ENCODE measurements at regions of chr1 and their contacts with region 1.

Region 1: GRCh38 chr1:156456622-156457465 is 43.7 kb downstream of the MEF2D start:
- DNase-seq: peak; percentile 95 to 99 (median 97)
- H3K4me3 ChIP-seq: peak overlapping the region; percentile 61 to 81
- H3K4me3 Mint-ChIP-seq: peak overlapping the region; percentile 92 to 97 (median 94)
- H3K27ac ChIP-seq: peak overlapping the region; percentile 99
- H3K27ac Mint-ChIP-seq: peak overlapping the region; percentile 98 to 100 (median 99)
- H3K4me1 ChIP-seq: peaks cover 17% of the 10 kb centered on the region
- H3K4me1 Mint-ChIP-seq: peaks cover 7 to 26% (median 12%) of the 10 kb centered on the region in 4 donors
- H3K27me3 ChIP-seq: no peaks in the 10 kb centered on the region
- H3K27me3 Mint-ChIP-seq: no peaks in the 10 kb centered on the region

Region 2: GRCh38 chr1:156409439-156409838 is 47.4 kb before region 1 on chr1:
- CTCF ChIA-PET with region 1: no interaction called
- POLR2A ChIA-PET with region 1: no interaction called
- intact Hi-C with region 1: no loop called
- DNase-seq: no peak
- H3K4me3 ChIP-seq: no peak overlapping the region
- H3K4me3 Mint-ChIP-seq: no peak overlapping the region
- H3K27ac ChIP-seq: no peak overlapping the region
- H3K27ac Mint-ChIP-seq: no peak overlapping the region
- H3K4me1 ChIP-seq: no peaks in the 10 kb centered on the region
- H3K4me1 Mint-ChIP-seq: no peaks in the 10 kb centered on the region
- H3K27me3 ChIP-seq: no peaks in the 10 kb centered on the region
- H3K27me3 Mint-ChIP-seq: peaks cover 16 to 35% of the 10 kb centered on the region in 2 donors

Region 3: GRCh38 chr1:156421062-156421938 is 35.5 kb before region 1 on chr1:
- CTCF ChIA-PET with region 1: no interaction called
- POLR2A ChIA-PET with region 1: interaction called, 3 read pairs
- intact Hi-C with region 1: loop called (anchors 5 kb)
- DNase-seq: peak; percentile 54 to 70 (median 63)
- H3K4me3 ChIP-seq: peak overlapping the region; percentile 23 to 71
- H3K4me3 Mint-ChIP-seq: peak overlapping the region; percentile 88 to 99 (median 90)
- H3K27ac ChIP-seq: no peak overlapping the region
- H3K27ac Mint-ChIP-seq: peak overlapping the region; percentile 17 to 83 (median 52)
- H3K4me1 ChIP-seq: peaks cover 33% of the 10 kb centered on the region
- H3K4me1 Mint-ChIP-seq: peaks cover 13 to 37% (median 23%) of the 10 kb centered on the region in 4 donors
- H3K27me3 ChIP-seq: peaks cover 47% of the 10 kb centered on the region
- H3K27me3 Mint-ChIP-seq: peaks cover 31 to 43% of the 10 kb centered on the region in 2 donors

Region 4: GRCh38 chr1:156480411-156481192 is 23.8 kb after region 1 on chr1:
- CTCF ChIA-PET with region 1: interaction called, 13 read pairs
- POLR2A ChIA-PET with region 1: interaction called, 4 read pairs
- intact Hi-C with region 1: loop called (anchors 1 kb)
- DNase-seq: peak; percentile 77 to 81 (median 80)
- H3K4me3 ChIP-seq: no peak overlapping the region
- H3K4me3 Mint-ChIP-seq: peak overlapping the region in 6 of 8 donors; percentile 33 to 58 (median 46)
- H3K27ac ChIP-seq: peak overlapping the region; percentile 42
- H3K27ac Mint-ChIP-seq: peak overlapping the region; percentile 75 to 97 (median 92)
- H3K4me1 ChIP-seq: peaks cover 47% of the 10 kb centered on the region
- H3K4me1 Mint-ChIP-seq: peaks cover 31 to 53% (median 44%) of the 10 kb centered on the region in 4 donors
- H3K27me3 ChIP-seq: no peaks in the 10 kb centered on the region
- H3K27me3 Mint-ChIP-seq: no peaks in the 10 kb centered on the region

Region 5: GRCh38 chr1:156551866-156552265 is 95.0 kb after region 1 on chr1:
- CTCF ChIA-PET with region 1: no interaction called
- POLR2A ChIA-PET with region 1: no interaction called
- intact Hi-C with region 1: no loop called
- DNase-seq: no peak
- H3K4me3 ChIP-seq: no peak overlapping the region
- H3K4me3 Mint-ChIP-seq: no peak overlapping the region
- H3K27ac ChIP-seq: no peak overlapping the region
- H3K27ac Mint-ChIP-seq: no peak overlapping the region
- H3K4me1 ChIP-seq: no peaks in the 10 kb centered on the region
- H3K4me1 Mint-ChIP-seq: peaks cover 2 to 5% (median 3%) of the 10 kb centered on the region in 4 donors
- H3K27me3 ChIP-seq: no peaks in the 10 kb centered on the region
- H3K27me3 Mint-ChIP-seq: no peaks in the 10 kb centered on the region

Region 6: DNA sequence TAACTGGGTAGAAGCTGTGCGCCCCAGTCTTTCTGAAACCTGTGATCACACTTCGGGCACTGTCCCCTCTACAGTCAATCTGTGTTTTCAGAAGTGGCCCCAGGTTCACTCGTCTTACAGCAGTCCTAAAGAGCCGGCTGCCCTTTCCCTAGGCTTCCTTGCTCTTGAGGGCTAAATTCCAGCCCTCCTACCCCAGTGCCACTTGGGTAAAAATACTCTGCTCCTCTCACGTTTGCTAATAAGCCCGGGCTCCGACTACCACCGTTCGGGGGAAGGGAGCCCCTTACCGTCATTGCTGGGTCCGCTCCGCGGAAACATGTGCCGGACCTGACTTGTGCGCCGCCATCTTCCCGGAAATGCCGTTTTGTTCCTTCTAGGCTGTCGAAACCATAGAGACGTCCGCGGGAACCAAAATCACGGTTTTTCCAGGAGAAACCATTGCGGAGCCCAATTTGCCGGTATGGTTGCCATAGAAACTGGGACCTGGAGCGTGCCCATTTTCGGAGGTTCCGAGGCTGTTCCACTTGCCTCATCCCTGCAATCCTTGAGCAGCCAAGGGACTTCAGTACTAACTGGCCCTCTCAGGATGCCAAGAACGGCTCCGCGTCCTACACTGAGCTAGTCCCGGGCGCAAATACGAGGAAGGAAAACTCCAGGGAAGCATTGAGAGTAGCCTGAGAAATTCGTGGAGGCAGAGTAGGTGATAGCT is 144.4 kb after region 1 on chr1 and contains the start of gene GPATCH4:
- CTCF ChIA-PET with region 1: interaction called, 5 read pairs
- POLR2A ChIA-PET with region 1: interaction called, 6 read pairs
- intact Hi-C with region 1: loop called (anchors 2 kb)
- DNase-seq: peak; percentile 75 to 82 (median 76)
- H3K4me3 ChIP-seq: peak within 1 kb of the TSS; percentile 82 to 83
- H3K4me3 Mint-ChIP-seq: peak within 1 kb of the TSS; percentile 90 to 100 (median 99)
- H3K27ac ChIP-seq: peak within 1 kb of the TSS; percentile 83
- H3K27ac Mint-ChIP-seq: peak within 1 kb of the TSS; percentile 83 to 100 (median 98)
- H3K4me1 ChIP-seq: peaks cover 30% of the 10 kb centered on the region
- H3K4me1 Mint-ChIP-seq: peaks cover 13 to 37% (median 26%) of the 10 kb centered on the region in 4 donors
- H3K27me3 ChIP-seq: no peaks in the 10 kb centered on the region
- H3K27me3 Mint-ChIP-seq: no peaks in the 10 kb centered on the region
- total RNA-seq, gene GPATCH4: 26.9 to 30.7 TPM

Region 7: GRCh38 chr1:156659994-156660751 is 203.3 kb after region 1 on chr1:
- CTCF ChIA-PET with region 1: no interaction called
- POLR2A ChIA-PET with region 1: no interaction called
- intact Hi-C with region 1: no loop called
- DNase-seq: peak; percentile 87 to 90 (median 88)
- H3K4me3 ChIP-seq: peak overlapping the region in 1 of 2 donors; percentile 9
- H3K4me3 Mint-ChIP-seq: peak overlapping the region; percentile 45 to 74 (median 60)
- H3K27ac ChIP-seq: no peak overlapping the region
- H3K27ac Mint-ChIP-seq: peak overlapping the region in 6 of 7 donors; percentile 69 to 90 (median 84)
- H3K4me1 ChIP-seq: peaks cover 64% of the 10 kb centered on the region
- H3K4me1 Mint-ChIP-seq: peaks cover 30 to 69% (median 46%) of the 10 kb centered on the region in 4 donors
- H3K27me3 ChIP-seq: peaks cover 10% of the 10 kb centered on the region
- H3K27me3 Mint-ChIP-seq: peaks cover 18 to 22% of the 10 kb centered on the region in 2 donors

Region 8: GRCh38 chr1:156781585-156782186 is 324.8 kb after region 1 on chr1:
- CTCF ChIA-PET with region 1: no interaction called
- POLR2A ChIA-PET with region 1: no interaction called
- intact Hi-C with region 1: no loop called
- DNase-seq: no peak
- H3K4me3 ChIP-seq: no peak overlapping the region
- H3K4me3 Mint-ChIP-seq: no peak overlapping the region
- H3K27ac ChIP-seq: no peak overlapping the region
- H3K27ac Mint-ChIP-seq: peak overlapping the region in 4 of 7 donors; percentile 3 to 47 (median 34)
- H3K4me1 ChIP-seq: peaks cover 11% of the 10 kb centered on the region
- H3K4me1 Mint-ChIP-seq: peaks cover 17 to 35% (median 26%) of the 10 kb centered on the region in 4 donors
- H3K27me3 ChIP-seq: no peaks in the 10 kb centered on the region
- H3K27me3 Mint-ChIP-seq: no peaks in the 10 kb centered on the region

Measured in CD4-positive, alpha-beta memory T cell (primary cell).